OCI-LY7 (cell line): ENCODE measurements at regions of chr2 and their contacts with region 1.

Region 1: GRCh38 chr2:111168528-111169239 is 48.0 kb downstream of the BCL2L11 start:
- DNase-seq: peak; percentile 12
- H3K4me3 ChIP-seq: no peak overlapping the region
- H3K27ac ChIP-seq: no peak overlapping the region
- H3K4me1 ChIP-seq: peaks cover 22% of the 10 kb centered on the region
- CTCF ChIP-seq: no peak

Region 2: DNA sequence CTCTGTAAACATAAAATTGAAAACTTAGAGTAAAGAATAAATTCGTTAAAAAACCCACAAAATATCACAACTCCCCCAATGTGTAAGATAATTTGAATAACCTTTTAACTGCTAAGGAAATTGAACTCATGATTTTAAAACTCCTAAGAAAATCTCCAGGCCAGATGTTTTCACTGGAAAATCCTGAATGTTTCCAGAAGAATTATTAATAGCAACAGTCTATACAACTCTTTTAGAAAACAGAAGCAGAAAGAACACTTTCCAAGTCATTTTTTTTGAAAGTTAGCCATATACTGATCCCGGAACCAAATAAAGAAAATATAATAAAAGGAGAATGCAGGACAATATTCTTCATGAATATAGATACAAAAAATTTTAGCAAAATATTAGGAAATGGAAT is 270.7 kb before region 1 on chr2:
- CTCF ChIA-PET with region 1: no interaction called
- POLR2A ChIA-PET with region 1: no interaction called
- intact Hi-C with region 1: no loop called
- DNase-seq: no peak
- H3K4me3 ChIP-seq: no peak overlapping the region
- H3K27ac ChIP-seq: no peak overlapping the region
- H3K4me1 ChIP-seq: no peaks in the 10 kb centered on the region
- CTCF ChIP-seq: no peak

Region 3: GRCh38 chr2:111201214-111201613 is 32.5 kb after region 1 on chr2:
- CTCF ChIA-PET with region 1: no interaction called
- POLR2A ChIA-PET with region 1: no interaction called
- intact Hi-C with region 1: loop called (anchors 5 kb)
- DNase-seq: no peak
- H3K4me3 ChIP-seq: no peak overlapping the region
- H3K27ac ChIP-seq: no peak overlapping the region
- H3K4me1 ChIP-seq: no peaks in the 10 kb centered on the region
- CTCF ChIP-seq: no peak